ENCODE measurements at regions of chr19 and their contacts with region 1.

Region 1: DNA sequence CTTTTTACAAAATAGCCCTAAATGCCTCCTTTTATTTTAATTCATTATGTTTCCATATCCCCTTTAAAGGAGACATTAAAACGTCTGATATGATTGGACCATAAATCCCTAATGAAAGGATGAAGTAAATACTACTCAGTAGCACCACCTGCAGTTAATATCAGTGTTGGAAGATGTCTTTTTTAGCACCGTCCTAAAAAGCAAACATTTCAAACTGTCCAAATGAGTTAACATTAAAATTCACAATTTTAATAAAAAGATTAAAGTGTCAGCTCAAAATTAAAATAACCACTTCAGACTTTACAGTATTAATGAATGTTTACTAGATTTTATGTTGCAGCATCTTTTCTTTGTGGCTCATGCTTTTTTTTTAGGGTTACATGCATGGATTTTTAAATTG is 12.3 kb downstream of the ZNF507 start:
- DNase-seq: no peak
- ATAC-seq: no peak
- H3K4me3 Mint-ChIP-seq: no peak overlapping the region
- H3K27ac Mint-ChIP-seq: no peak overlapping the region
- H3K4me1 Mint-ChIP-seq: peaks cover 24% of the 10 kb centered on the region
- H3K27me3 Mint-ChIP-seq: no peaks in the 10 kb centered on the region
- CTCF ChIP-seq: no peak

Region 2: GRCh38 chr19:32339988-32340874 is 17.5 kb before region 1 on chr19:
- CTCF ChIA-PET with region 1: interaction called, 6 read pairs
- POLR2A ChIA-PET with region 1: interaction called, 5 read pairs
- intact Hi-C with region 1: loop called (anchors 2 kb)
- DNase-seq: peak; percentile 23
- ATAC-seq: peak; percentile 90
- H3K4me3 Mint-ChIP-seq: no peak overlapping the region
- H3K27ac Mint-ChIP-seq: no peak overlapping the region
- H3K4me1 Mint-ChIP-seq: no peaks in the 10 kb centered on the region
- H3K27me3 Mint-ChIP-seq: no peaks in the 10 kb centered on the region
- CTCF ChIP-seq: no peak

Region 3: DNA sequence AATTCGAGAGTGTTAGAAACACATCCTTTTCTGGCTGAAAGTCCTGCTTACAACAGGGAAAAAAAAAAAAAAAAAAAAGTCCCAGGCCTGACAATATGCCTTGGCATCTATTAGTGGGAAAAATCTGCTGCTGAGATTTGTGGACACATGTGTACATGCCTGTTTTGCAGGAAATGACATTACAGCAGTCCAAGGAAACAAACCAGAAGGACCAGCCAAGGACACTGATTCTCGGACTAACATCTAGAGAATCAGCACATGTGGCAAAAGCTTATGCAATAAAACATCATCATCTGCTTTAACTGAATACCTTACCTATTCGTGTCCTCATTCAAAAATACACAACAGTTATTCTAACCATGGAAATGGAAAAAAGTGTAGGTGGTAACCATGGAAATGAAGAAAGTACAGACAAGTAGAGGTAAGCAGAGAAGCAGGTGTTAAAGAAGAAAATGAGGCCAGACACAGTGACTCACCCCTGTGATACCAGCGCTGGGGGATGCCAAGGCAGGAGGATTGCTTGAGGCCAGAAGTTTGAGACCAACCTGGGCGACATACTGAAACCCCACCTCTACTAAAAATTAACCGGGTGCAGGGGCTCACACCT is 38.4 kb after region 1 on chr19:
- CTCF ChIA-PET with region 1: no interaction called
- POLR2A ChIA-PET with region 1: interaction called, 12 read pairs
- intact Hi-C with region 1: no loop called
- DNase-seq: no peak
- ATAC-seq: no peak
- H3K4me3 Mint-ChIP-seq: no peak overlapping the region
- H3K27ac Mint-ChIP-seq: no peak overlapping the region
- H3K4me1 Mint-ChIP-seq: no peaks in the 10 kb centered on the region
- H3K27me3 Mint-ChIP-seq: no peaks in the 10 kb centered on the region
- CTCF ChIP-seq: no peak

Region 4: DNA sequence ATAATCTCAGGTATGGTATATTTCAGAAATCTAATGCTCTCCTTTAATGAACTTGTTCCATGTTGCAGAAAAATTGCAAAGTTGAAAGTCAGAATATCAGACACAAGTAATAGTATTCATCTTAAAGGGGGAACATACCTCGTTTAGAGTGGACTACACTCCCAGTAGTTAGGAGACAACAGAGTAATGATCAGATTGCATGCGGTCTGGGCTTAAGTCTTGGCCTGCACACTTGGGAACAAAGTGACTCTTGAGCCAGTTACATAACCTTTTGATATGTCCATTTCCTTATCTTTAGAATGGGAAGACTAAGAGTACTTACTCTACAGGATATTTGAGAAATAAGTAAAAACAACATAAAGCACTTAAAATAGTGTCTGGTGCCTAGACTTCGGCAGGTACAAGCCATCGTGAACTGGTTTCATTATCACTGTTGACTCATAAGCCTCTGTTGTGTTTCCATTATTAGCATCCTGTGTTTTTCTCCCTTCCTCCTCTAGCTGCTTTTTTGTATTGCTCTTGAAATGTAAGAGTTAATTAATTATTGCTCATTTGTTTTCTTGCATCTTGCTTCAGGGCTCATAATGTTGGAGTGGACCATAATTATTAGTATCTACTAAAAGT is 100.9 kb after region 1 on chr19:
- CTCF ChIA-PET with region 1: no interaction called
- POLR2A ChIA-PET with region 1: no interaction called
- intact Hi-C with region 1: no loop called
- DNase-seq: no peak
- ATAC-seq: no peak
- H3K4me3 Mint-ChIP-seq: no peak overlapping the region
- H3K27ac Mint-ChIP-seq: no peak overlapping the region
- H3K4me1 Mint-ChIP-seq: peaks cover 11% of the 10 kb centered on the region
- H3K27me3 Mint-ChIP-seq: no peaks in the 10 kb centered on the region
- CTCF ChIP-seq: no peak